ENCODE measurements at regions of chr15 and their contacts with region 1.

Region 1: GRCh38 chr15:71792521-71792920 is 17.8 kb upstream of the NR2E3 start:
- DNase-seq: no peak
- H3K4me3 Mint-ChIP-seq: no peak overlapping the region
- H3K27ac Mint-ChIP-seq: no peak overlapping the region
- H3K4me1 Mint-ChIP-seq: peaks cover 12% of the 10 kb centered on the region
- H3K27me3 Mint-ChIP-seq: no peaks in the 10 kb centered on the region
- CTCF ChIP-seq: no peak

Region 2: DNA sequence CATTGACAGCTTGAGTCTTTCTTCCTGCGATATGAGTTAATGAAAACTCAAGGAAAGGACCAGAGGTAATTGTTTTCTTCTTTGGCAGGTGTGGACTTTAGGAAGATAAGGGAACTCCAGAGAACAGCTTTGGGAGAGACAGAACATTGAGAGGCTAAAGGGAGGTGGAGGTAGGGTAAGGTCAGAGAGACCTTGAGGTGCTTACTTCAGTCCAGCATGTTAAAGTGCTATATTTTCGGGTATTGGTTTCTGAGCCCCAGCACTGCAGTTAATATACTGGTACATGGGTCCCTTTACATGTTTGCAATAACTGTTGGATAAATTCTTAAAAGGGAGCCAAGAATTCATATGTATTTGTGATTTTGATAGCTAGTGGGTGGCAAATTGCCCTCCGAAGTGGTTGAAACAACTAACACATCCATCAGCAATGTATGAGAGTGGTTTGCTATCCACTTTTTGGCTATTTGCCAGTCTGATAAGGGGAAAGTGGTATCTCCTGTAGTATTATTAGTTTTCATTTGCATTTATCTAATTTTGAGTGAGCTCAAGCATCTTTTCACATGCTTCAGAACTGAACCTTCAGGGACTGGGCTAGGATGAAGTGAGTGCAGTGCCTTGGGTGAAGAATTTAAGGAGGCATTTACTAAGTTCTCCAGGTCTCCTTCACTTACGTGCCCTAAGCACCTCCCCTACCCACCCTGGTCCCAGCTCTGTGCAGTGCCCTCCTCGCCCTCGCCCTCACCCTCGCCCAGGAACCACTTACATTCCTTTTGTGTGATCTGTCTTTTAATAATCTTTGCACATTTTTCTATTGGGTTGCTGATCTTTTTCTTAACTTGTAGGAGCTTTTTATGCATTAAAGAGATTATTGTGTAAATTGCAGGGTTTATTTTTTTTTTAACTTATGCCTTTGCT is 354.9 kb before region 1 on chr15:
- CTCF ChIA-PET with region 1: no interaction called
- POLR2A ChIA-PET with region 1: no interaction called
- intact Hi-C with region 1: no loop called
- DNase-seq: no peak
- H3K4me3 Mint-ChIP-seq: no peak overlapping the region
- H3K27ac Mint-ChIP-seq: no peak overlapping the region
- H3K4me1 Mint-ChIP-seq: peaks cover 17% of the 10 kb centered on the region
- H3K27me3 Mint-ChIP-seq: no peaks in the 10 kb centered on the region
- CTCF ChIP-seq: no peak

Region 3: DNA sequence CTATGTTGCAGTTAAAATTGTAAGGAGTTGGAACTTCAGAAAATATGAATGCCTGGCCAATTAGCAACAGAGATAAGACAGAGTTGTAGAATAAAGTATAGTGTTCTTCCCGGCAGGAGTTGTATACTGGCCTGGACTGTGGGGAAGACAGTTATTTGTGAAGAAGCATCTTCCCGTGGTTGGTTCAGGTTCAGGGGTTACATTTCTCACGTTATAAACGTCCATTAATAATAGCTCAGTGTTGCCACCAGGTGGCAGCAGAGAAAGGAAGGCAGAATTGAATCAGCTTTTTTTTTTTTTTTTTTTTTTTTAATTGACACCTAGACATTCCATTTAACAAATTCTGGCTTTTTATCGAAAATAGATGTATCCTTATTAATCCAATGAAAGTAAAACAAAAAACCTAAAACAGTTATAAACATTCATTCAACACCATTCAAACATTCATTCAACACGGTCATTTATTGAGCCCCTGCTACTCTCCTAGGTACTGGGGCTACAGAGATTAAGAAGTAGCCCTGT is 48.6 kb before region 1 on chr15:
- CTCF ChIA-PET with region 1: interaction called, 149 read pairs
- POLR2A ChIA-PET with region 1: interaction called, 4 read pairs
- intact Hi-C with region 1: no loop called
- DNase-seq: peak; percentile 72
- H3K4me3 Mint-ChIP-seq: no peak overlapping the region
- H3K27ac Mint-ChIP-seq: no peak overlapping the region
- H3K4me1 Mint-ChIP-seq: peaks cover 19% of the 10 kb centered on the region
- H3K27me3 Mint-ChIP-seq: no peaks in the 10 kb centered on the region
- CTCF ChIP-seq: peak; percentile 56

Region 4: GRCh38 chr15:71808311-71809020 is 15.9 kb after region 1 on chr15:
- CTCF ChIA-PET with region 1: no interaction called
- POLR2A ChIA-PET with region 1: no interaction called
- intact Hi-C with region 1: no loop called
- DNase-seq: no peak
- H3K4me3 Mint-ChIP-seq: no peak overlapping the region
- H3K27ac Mint-ChIP-seq: no peak overlapping the region
- H3K4me1 Mint-ChIP-seq: no peaks in the 10 kb centered on the region
- H3K27me3 Mint-ChIP-seq: no peaks in the 10 kb centered on the region
- CTCF ChIP-seq: no peak

Measured in MCF 10A (cell line).